Activated CD4-positive, alpha-beta T cell treated with anti-CD3 and anti-CD28 coated beads for 36 hours (primary cell): ENCODE measurements at regions of chr4 and their contacts with region 1.

Region 1: DNA sequence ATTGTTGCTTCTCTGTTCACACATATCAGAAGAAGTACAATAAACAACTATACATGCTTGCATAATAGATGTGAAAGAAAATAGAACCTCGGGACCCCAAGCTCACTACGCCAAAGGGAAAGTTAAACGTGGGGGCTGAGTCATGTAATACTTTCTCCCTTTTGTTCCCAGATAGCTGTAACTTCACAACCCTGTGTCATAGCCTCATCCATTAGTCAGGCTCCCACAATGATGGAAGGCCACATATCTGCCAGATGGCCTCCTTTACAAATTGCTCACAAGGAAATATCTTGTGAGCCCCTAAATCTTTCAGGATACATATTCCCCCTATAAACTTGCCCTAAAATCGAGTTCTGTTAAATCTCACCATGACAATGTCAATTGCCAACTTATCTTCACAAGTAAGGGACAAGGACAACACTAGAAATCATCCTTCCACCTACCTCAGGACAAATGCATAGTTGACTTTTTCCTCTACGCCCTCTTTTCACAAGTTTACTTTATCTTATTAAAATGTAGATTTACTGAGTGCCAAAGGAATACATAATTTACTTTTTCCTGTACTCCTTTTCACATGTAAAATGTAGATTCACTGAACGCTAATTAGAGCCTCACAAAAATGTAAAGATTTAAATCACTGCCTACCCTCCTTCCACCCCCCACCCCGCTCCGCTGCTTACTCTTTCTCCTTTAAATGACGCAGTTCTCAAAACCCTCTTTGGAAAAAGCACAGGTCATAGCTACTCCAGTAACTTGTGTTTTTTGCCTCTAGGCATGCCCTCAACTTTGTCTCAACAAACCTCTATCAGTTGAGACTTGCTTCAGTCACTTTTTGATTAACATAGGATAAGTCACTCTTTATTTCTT is 477.1 kb downstream of the DTHD1 start:
- DNase-seq: no peak
- ATAC-seq: no peak
- H3K4me3 Mint-ChIP-seq: no peak overlapping the region
- H3K27ac Mint-ChIP-seq: no peak overlapping the region
- H3K4me1 Mint-ChIP-seq: no peaks in the 10 kb centered on the region
- H3K27me3 Mint-ChIP-seq: no peaks in the 10 kb centered on the region

Region 2: DNA sequence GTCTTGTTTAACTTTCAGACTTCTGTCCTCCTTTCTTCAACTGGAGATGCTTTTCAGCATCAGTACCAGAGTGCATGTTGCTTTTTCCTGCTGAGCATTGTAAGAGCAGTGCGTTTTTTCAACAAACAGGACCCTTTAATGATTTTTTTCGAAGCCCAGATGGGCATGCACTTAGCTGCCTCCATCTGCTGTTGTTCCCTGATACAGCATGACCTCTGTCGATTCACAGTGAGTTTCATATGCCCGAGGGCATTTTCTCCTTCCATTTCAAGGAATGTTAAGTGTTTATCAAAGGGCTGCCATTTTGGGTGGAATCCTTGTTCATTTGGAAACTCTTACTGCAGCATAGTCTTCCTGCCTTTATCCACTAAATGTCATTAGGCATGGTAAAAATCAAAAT is 48.6 kb before region 1 on chr4:
- CTCF ChIA-PET with region 1: no interaction called
- POLR2A ChIA-PET with region 1: no interaction called
- intact Hi-C with region 1: loop called in 1 of 2 experiments (anchors 5 kb)
- DNase-seq: no peak
- ATAC-seq: no peak
- H3K4me3 Mint-ChIP-seq: no peak overlapping the region
- H3K27ac Mint-ChIP-seq: no peak overlapping the region
- H3K4me1 Mint-ChIP-seq: no peaks in the 10 kb centered on the region
- H3K27me3 Mint-ChIP-seq: no peaks in the 10 kb centered on the region

Region 3: GRCh38 chr4:36747277-36748129 is 11.0 kb before region 1 on chr4:
- CTCF ChIA-PET with region 1: no interaction called
- POLR2A ChIA-PET with region 1: no interaction called
- intact Hi-C with region 1: no loop called
- DNase-seq: no peak
- ATAC-seq: no peak
- H3K4me3 Mint-ChIP-seq: no peak overlapping the region
- H3K27ac Mint-ChIP-seq: no peak overlapping the region
- H3K4me1 Mint-ChIP-seq: no peaks in the 10 kb centered on the region
- H3K27me3 Mint-ChIP-seq: peaks cover 4% of the 10 kb centered on the region

Region 4: GRCh38 chr4:36891971-36892370 is 133.4 kb after region 1 on chr4:
- CTCF ChIA-PET with region 1: no interaction called
- POLR2A ChIA-PET with region 1: no interaction called
- intact Hi-C with region 1: no loop called
- DNase-seq: no peak
- ATAC-seq: no peak
- H3K4me3 Mint-ChIP-seq: no peak overlapping the region
- H3K27ac Mint-ChIP-seq: no peak overlapping the region
- H3K4me1 Mint-ChIP-seq: no peaks in the 10 kb centered on the region
- H3K27me3 Mint-ChIP-seq: no peaks in the 10 kb centered on the region